BJ (cell line): ENCODE measurements at regions of chr4 and their contacts with region 1.

Region 1: DNA sequence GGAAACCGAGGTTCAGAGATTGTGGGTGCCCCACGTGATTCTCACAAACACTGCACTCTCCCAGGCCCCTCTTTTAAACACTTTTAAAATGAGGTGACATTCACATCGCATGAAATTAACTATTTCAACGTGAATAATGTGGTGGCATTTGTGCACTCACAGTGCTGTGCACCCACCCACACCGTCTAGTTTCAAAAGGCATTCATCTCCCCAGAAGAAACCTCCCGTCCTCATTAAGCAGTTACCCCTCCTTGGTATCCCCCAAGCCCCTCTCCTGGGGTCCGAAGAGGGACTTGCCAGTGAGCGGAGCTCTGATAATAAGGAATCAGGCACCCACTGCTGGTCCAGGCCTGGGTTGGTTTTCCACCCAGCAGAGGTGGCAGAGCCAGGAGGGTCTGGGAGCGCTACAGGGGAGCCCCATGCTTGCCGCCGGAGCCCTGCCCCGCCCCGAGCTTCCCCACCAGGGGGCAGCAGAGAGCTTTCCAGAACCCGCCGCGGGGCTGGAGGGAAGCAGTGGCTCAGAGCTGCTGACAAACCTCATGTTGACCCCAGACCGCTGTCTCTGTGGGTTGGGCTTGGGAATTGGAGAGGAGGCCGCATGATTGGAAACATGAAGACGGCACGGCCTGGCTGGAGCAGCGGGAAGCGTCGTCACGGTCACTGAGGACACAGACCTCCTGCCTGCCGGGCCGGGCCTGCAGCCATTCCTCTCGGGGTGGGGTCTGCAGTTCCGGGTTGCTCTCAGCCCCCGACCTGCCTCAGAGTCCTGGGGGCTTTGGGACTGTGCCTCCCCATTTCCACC is 27.5 kb upstream of the HTRA3 start:
- DNase-seq: peak; percentile 60
- H3K4me3 ChIP-seq: no peak overlapping the region
- H3K27me3 ChIP-seq: no peaks in the 10 kb centered on the region
- CTCF ChIP-seq: peak; percentile 99

Region 2: DNA sequence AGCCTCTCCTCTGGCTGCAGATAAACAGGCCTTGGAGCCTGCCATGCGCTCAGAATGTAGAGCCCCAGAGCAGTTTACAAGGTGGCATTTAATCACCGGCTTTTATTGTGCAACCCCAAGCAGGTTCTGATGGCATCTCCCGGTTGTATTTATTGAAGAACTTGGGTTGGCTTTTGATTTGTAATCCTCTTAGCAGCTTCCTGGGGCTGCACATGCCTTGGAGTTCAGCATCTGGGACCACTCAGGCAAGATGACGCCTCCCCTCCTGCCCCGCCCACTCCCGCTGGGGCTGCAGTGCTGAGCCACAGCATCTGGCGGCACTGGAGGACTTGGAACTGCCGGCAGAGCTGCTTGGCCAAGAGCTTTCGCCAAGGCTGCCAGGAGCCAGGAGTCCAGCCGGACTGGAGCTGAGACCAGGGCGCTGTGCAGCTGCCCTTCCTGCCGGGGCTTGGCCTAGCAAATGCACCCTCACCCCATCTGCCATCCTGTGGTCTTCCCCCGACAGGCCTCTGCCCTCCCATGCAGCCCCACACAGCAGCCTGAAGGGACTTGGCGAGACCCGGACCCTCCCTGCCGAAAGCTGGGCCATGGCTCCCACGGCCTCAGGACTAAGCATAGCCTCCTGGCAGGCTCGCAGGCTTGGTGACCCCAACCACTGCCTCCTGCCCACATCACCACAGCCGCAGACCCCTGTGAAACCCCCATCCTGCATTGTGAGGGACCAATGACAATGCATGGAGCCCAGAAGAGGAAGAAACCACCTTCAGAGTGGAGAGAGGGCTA is 32.9 kb after region 1 on chr4:
- CTCF ChIA-PET with region 1: interaction called, 12 read pairs
- POLR2A ChIA-PET with region 1: no interaction called
- DNase-seq: peak; percentile 77
- H3K4me3 ChIP-seq: no peak overlapping the region
- H3K27me3 ChIP-seq: peaks cover 4% of the 10 kb centered on the region; the same call in 1 of the 2 replicates
- CTCF ChIP-seq: peak; percentile 76

Region 3: GRCh38 chr4:8393593-8394038 is 151.5 kb after region 1 on chr4:
- CTCF ChIA-PET with region 1: interaction called, 36 read pairs
- POLR2A ChIA-PET with region 1: no interaction called
- DNase-seq: peak; percentile 96
- H3K4me3 ChIP-seq: no peak overlapping the region
- H3K27me3 ChIP-seq: no peaks in the 10 kb centered on the region
- CTCF ChIP-seq: peak; percentile 40

Region 4: DNA sequence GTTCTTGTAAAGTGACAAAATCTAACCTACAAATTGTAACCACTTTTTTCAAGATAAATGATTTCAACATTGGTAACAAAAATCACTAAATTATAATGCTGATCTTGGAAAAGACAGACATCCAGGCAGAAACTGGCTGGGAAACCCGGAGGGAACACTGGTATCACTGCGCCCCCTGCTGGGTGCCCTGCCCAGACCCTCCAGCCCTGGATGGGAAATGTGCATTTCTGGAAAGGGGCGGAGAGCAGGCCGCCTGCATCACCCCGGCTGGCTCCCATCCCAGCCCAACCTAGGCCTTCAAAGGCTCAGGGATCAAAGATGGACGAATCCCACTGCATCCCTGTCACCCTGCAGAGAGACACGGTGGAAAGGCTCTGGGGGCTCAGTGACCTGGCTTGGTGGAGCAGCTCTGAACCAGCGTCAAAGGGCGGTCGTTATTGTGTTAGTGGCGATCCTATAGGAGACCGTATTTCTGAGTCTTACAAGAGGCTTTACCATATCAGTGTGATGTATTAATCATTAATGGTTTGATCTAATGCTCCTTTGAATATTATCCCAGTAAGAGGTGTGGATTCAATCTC is 161.2 kb after region 1 on chr4:
- CTCF ChIA-PET with region 1: interaction called, 76 read pairs
- POLR2A ChIA-PET with region 1: no interaction called
- DNase-seq: no peak
- H3K4me3 ChIP-seq: no peak overlapping the region
- H3K27me3 ChIP-seq: no peaks in the 10 kb centered on the region
- CTCF ChIP-seq: peak; percentile 92

Region 5: DNA sequence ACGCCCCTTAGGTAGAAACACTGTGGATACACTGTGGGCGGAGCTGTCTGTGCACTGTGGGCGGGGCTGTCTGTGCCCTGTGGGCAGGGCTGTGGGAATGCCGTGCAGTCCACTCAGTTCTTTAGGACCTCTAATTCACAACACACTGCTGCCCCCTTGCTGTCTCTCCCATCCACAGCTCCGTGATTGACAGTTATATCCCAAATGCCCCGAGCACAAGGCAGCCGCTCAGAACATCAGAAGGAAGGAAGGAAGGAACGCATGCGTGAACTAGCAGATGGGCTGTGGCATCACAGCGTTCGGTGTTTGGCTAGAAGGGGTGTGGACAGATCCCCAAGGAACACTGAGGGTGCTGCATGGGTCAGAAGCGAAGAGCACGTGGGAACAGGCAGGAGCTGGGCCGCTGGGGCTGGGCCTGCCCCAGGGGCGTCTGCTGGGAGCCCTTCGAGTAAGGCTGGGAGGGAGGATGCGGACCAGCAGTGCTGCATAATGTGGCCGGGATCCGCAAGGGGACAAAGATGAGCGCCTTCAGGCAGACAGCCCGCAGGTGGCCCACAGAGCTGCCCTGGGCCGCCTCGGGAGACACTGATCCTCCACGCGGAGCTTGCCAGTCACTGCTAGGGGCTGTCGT is 168.7 kb after region 1 on chr4:
- CTCF ChIA-PET with region 1: interaction called, 76 read pairs
- POLR2A ChIA-PET with region 1: no interaction called
- DNase-seq: no peak
- H3K4me3 ChIP-seq: no peak overlapping the region
- H3K27me3 ChIP-seq: no peaks in the 10 kb centered on the region
- CTCF ChIP-seq: peak; percentile 24; the same call in 1 of the 2 replicates